Activated CD8-positive, alpha-beta T cell treated with anti-CD3 and anti-CD28 coated beads for 36 hours (primary cell): ENCODE measurements at regions of chr2 and their contacts with region 1.

Region 1: DNA sequence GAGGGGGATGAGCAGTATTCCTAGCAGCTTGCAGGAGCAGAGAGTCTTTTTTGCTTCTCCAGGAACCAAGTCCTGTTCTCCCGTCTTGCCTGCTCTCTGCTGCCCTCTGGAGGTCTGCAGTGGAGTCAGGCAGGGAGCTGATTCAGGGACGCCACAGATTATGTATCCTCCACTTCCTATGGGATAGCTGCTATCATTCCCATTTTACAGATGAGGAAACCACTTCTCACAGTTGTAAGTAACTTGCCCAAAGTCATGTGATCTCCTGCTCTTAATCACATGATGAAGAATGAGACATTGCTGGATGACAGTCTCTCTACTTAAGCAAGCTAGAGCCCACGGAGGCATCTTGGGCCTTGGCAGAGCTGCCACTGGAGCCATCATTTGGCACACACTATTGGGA is 8.3 kb downstream of the SLC4A5 start:
- DNase-seq: peak; percentile 80
- ATAC-seq: peak; percentile 90
- H3K4me3 Mint-ChIP-seq: no peak overlapping the region
- H3K27ac Mint-ChIP-seq: no peak overlapping the region
- H3K4me1 Mint-ChIP-seq: no peaks in the 10 kb centered on the region
- H3K27me3 Mint-ChIP-seq: no peaks in the 10 kb centered on the region
- CTCF ChIP-seq: peak; percentile 96

Region 2: GRCh38 chr2:73828818-73829570 is 505.9 kb before region 1 on chr2 and contains the start of gene STAMBP:
- CTCF ChIA-PET with region 1: interaction called, 16 read pairs
- POLR2A ChIA-PET with region 1: no interaction called
- intact Hi-C with region 1: no loop called
- DNase-seq: peak; percentile 95
- ATAC-seq: peak; percentile 75
- H3K4me3 Mint-ChIP-seq: peak within 1 kb of the TSS; percentile 80
- H3K27ac Mint-ChIP-seq: peak within 1 kb of the TSS; percentile 95
- H3K4me1 Mint-ChIP-seq: peaks cover 43% of the 10 kb centered on the region
- H3K27me3 Mint-ChIP-seq: no peaks in the 10 kb centered on the region
- CTCF ChIP-seq: no peak
- total RNA-seq, gene STAMBP: 76.9 to 87.1 TPM

Region 3: DNA sequence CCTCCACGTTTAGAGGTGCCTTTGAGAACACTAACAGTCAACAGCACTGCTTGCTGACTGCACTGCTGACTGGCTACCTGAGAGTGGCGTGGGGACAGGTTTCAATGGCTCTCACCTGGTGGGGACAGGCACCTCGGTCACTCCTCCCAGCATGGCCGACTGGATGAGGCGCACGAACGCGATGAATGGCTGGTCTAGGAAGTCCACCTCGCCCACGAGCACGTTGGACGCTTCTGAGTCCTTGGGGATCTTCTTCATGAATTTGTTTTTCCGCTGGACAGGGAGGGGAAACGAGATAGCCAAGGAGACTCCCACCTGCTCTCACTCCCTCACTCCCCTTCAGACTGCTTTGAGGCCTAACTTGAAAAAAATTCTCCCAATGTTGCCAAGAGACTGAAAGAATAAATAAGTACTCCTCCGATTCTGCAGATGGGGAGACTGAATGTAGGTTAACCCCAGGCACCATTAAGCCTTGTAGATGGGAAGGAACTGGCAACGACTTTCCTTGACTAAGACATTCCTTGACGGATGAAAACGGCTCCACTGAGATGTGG is 79.2 kb before region 1 on chr2:
- CTCF ChIA-PET with region 1: interaction called, 190 read pairs
- POLR2A ChIA-PET with region 1: interaction called, 3 read pairs
- intact Hi-C with region 1: loop called (anchors 1 kb)
- DNase-seq: no peak
- ATAC-seq: no peak
- H3K4me3 Mint-ChIP-seq: no peak overlapping the region
- H3K27ac Mint-ChIP-seq: no peak overlapping the region
- H3K4me1 Mint-ChIP-seq: no peaks in the 10 kb centered on the region
- H3K27me3 Mint-ChIP-seq: no peaks in the 10 kb centered on the region
- CTCF ChIP-seq: no peak

Region 4: DNA sequence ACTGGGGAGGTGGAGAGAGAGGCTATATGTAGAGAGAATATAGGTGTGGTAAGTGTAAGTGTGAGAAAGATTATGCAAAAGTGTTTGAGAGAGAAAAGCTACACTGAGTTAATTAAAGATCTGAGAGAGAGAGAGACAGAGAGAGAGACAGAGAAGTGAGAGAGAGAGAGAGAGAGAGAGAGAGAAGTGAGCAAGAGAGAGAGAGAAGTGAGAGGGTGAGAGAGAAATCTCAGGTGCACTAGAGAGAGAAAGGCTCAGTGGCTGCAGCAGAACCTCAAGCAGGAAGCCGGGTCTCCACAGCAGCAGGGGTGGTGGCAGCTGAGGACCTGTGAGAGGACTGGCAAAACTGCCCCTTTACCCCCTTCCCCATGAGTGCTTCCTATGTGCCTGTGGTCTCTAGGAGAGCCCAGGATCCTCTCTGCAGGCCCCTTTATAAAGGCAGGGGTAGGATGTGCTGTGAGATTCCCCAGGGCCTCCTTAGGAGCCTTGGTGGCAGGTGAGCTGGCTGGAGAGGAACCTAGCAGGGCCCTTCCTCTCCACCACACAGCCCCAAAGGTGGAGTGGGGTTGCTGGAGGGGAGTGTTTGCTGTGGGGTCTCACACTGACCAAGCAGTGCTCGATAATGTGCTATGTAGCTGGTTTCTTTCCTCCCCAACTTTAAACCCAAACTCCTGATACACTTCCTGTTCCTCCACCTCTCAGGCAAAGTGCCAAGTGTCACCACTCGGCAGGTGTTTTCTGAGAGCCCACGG is 44.3 kb before region 1 on chr2:
- CTCF ChIA-PET with region 1: interaction called, 39 read pairs
- POLR2A ChIA-PET with region 1: interaction called, 3 read pairs
- intact Hi-C with region 1: no loop called
- DNase-seq: peak; percentile 49
- ATAC-seq: peak; percentile 78
- H3K4me3 Mint-ChIP-seq: peak overlapping the region; percentile 18
- H3K27ac Mint-ChIP-seq: peak overlapping the region; percentile 85
- H3K4me1 Mint-ChIP-seq: peaks cover 16% of the 10 kb centered on the region
- H3K27me3 Mint-ChIP-seq: no peaks in the 10 kb centered on the region
- CTCF ChIP-seq: no peak

Region 5: GRCh38 chr2:74345272-74345943 is 10.5 kb after region 1 on chr2:
- CTCF ChIA-PET with region 1: interaction called, 54 read pairs
- POLR2A ChIA-PET with region 1: no interaction called
- intact Hi-C with region 1: no loop called
- DNase-seq: no peak
- ATAC-seq: no peak
- H3K4me3 Mint-ChIP-seq: no peak overlapping the region
- H3K27ac Mint-ChIP-seq: no peak overlapping the region
- H3K4me1 Mint-ChIP-seq: no peaks in the 10 kb centered on the region
- H3K27me3 Mint-ChIP-seq: no peaks in the 10 kb centered on the region
- CTCF ChIP-seq: no peak

Region 6: GRCh38 chr2:74369976-74370375 is 35.0 kb after region 1 on chr2:
- CTCF ChIA-PET with region 1: interaction called, 16 read pairs
- POLR2A ChIA-PET with region 1: no interaction called
- intact Hi-C with region 1: no loop called
- DNase-seq: no peak
- ATAC-seq: no peak
- H3K4me3 Mint-ChIP-seq: no peak overlapping the region
- H3K27ac Mint-ChIP-seq: no peak overlapping the region
- H3K4me1 Mint-ChIP-seq: no peaks in the 10 kb centered on the region
- H3K27me3 Mint-ChIP-seq: no peaks in the 10 kb centered on the region
- CTCF ChIP-seq: no peak